GM12878 (cell line): ENCODE measurements at regions of chr5 and their contacts with region 1.

Region 1: DNA sequence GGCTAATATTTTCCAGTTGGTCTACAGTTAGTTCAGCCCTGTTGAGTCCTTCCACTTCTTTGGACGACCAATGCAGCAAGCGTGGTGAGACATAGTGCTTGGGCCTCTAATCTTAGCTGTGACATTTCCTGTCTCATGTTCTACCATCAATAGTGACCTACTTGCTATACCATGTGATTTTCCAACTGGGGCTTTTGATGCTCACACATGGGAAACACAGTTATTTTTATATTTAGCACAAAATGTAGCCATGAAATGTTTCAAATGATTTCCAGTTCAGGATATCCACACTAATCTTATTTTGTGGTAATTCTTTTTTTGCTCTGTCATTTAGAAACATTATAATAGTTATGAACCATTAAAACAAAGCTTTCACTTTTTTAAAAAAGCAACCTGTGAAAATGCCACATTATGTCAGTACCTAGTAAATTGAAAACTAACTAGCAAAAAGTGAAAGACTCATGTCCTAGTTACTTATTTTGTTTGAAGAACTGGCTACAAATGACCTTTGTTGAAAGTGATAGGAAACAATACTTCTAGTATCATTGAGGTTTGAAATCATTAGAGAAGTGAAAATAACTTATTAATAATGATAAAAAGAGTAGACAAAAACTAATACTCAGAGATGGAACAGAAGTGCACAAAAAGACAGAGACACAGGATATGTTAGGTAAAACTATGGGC is 18.3 kb downstream of the MARCHF3 start:
- DNase-seq: peak; percentile 66
- ATAC-seq: peak; percentile 85
- H3K4me3 ChIP-seq: no peak overlapping the region
- H3K27ac ChIP-seq: peak overlapping the region; percentile 65
- H3K4me1 ChIP-seq: peaks cover 25% of the 10 kb centered on the region
- H3K27me3 ChIP-seq: no peaks in the 10 kb centered on the region
- CTCF ChIP-seq: no peak
- EP300 ChIP-seq: peak; percentile 73 to 87; a peak in 2 of 4 replicates
- POLR2A ChIP-seq: 0 out of 2 replicates have a peak, but pooled peaks have one; percentile 20
- RAD21 ChIP-seq: no peak

Region 2: DNA sequence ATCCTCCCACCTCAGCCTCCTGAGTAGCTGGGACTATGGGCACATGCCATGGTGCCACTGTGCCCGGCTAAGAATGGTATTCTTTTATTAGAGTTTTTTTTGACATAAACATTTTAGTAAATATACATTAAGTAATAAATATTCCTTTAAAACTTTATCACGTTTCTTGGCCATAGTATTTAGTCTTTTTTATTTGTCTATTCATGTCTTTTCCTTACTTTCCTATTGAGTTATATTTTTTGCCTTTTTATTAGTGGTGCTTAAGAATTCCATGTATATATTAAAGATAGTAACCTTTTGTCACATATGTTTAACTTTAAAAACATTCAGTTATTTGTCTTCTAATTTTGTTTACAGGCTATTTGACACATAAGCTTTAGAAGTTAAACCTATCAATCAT is 55.1 kb before region 1 on chr5:
- CTCF ChIA-PET with region 1: no interaction called
- POLR2A ChIA-PET with region 1: no interaction called
- RAD21 ChIA-PET with region 1: interaction called, 4 read pairs
- SMC1A ChIA-PET with region 1: interaction called, 10 read pairs
- in situ Hi-C with region 1: no loop called
- intact Hi-C with region 1: no loop called
- DNase-seq: no peak
- ATAC-seq: no peak
- H3K4me3 ChIP-seq: no peak overlapping the region
- H3K27ac ChIP-seq: no peak overlapping the region
- H3K4me1 ChIP-seq: no peaks in the 10 kb centered on the region
- H3K27me3 ChIP-seq: no peaks in the 10 kb centered on the region
- CTCF ChIP-seq: no peak
- EP300 ChIP-seq: no peak
- POLR2A ChIP-seq: no peak
- RAD21 ChIP-seq: no peak

Region 3: GRCh38 chr5:126972062-126972895 is 39.8 kb before region 1 on chr5:
- CTCF ChIA-PET with region 1: interaction called, 4 read pairs
- POLR2A ChIA-PET with region 1: interaction called, 14 read pairs
- RAD21 ChIA-PET with region 1: interaction called, 102 read pairs
- SMC1A ChIA-PET with region 1: interaction called, 102 read pairs
- in situ Hi-C with region 1: no loop called
- intact Hi-C with region 1: loop called (anchors 1 kb)
- DNase-seq: peak; percentile 76
- ATAC-seq: peak; percentile 83
- H3K4me3 ChIP-seq: no peak overlapping the region
- H3K27ac ChIP-seq: peak overlapping the region; percentile 78
- H3K4me1 ChIP-seq: peaks cover 34% of the 10 kb centered on the region
- H3K27me3 ChIP-seq: no peaks in the 10 kb centered on the region
- CTCF ChIP-seq: no peak
- EP300 ChIP-seq: peak; percentile 54 to 55; a peak in 3 of 4 replicates
- POLR2A ChIP-seq: no peak
- RAD21 ChIP-seq: no peak

Region 4: GRCh38 chr5:126998201-126998631 is 13.9 kb before region 1 on chr5:
- CTCF ChIA-PET with region 1: interaction called, 9 read pairs
- POLR2A ChIA-PET with region 1: interaction called, 12 read pairs
- RAD21 ChIA-PET with region 1: interaction called, 21 read pairs
- SMC1A ChIA-PET with region 1: interaction called, 27 read pairs
- in situ Hi-C with region 1: no loop called
- intact Hi-C with region 1: no loop called
- DNase-seq: peak; percentile 35
- ATAC-seq: peak; percentile 88
- H3K4me3 ChIP-seq: no peak overlapping the region
- H3K27ac ChIP-seq: peak overlapping the region; percentile 46
- H3K4me1 ChIP-seq: peaks cover 5% of the 10 kb centered on the region
- H3K27me3 ChIP-seq: no peaks in the 10 kb centered on the region
- CTCF ChIP-seq: peak in 1 of 3 experiments; percentile 27; a peak in 2 of 6 replicates
- EP300 ChIP-seq: no peak
- POLR2A ChIP-seq: no peak
- RAD21 ChIP-seq: peak; percentile 56